ENCODE measurements at regions of chr1 and their contacts with region 1.

Region 1: GRCh38 chr1:165755393-165756010 is 13.2 kb downstream of the TMCO1 start:
- DNase-seq: no peak
- ATAC-seq: no peak
- H3K4me3 ChIP-seq: no peak overlapping the region
- H3K27ac ChIP-seq: no peak overlapping the region
- H3K4me1 ChIP-seq: no peaks in the 10 kb centered on the region
- H3K27me3 ChIP-seq: no peaks in the 10 kb centered on the region
- CTCF ChIP-seq: no peak

Region 2: DNA sequence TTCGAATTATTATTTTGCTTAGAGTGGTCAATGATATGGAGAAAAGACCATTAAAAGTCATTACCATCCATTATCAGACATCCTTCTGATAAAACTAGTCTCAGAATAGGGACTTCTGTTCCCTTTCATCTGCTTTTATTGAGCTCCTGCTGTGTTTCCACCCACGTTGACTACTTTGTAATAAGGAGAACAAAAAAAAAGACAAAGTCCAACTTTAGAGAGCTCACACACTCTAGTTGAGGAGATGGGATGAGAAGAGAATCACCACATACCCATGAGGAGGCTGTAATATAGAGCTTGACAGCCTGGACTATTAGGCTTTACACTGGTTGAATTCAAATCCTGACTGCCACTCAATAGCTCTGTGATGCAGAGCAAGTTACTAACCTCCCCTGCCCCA is 29.3 kb before region 1 on chr1:
- intact Hi-C with region 1: loop called in 1 of 2 experiments (anchors 1 kb)
- DNase-seq: no peak
- ATAC-seq: no peak
- H3K4me3 ChIP-seq: no peak overlapping the region
- H3K27ac ChIP-seq: no peak overlapping the region
- H3K4me1 ChIP-seq: no peaks in the 10 kb centered on the region
- H3K27me3 ChIP-seq: no peaks in the 10 kb centered on the region
- CTCF ChIP-seq: no peak

Measured in psoas muscle (tissue), 8 donors.